PC-9 (cell line): ENCODE measurements at regions of chr7 and their contacts with region 1.

Region 1: DNA sequence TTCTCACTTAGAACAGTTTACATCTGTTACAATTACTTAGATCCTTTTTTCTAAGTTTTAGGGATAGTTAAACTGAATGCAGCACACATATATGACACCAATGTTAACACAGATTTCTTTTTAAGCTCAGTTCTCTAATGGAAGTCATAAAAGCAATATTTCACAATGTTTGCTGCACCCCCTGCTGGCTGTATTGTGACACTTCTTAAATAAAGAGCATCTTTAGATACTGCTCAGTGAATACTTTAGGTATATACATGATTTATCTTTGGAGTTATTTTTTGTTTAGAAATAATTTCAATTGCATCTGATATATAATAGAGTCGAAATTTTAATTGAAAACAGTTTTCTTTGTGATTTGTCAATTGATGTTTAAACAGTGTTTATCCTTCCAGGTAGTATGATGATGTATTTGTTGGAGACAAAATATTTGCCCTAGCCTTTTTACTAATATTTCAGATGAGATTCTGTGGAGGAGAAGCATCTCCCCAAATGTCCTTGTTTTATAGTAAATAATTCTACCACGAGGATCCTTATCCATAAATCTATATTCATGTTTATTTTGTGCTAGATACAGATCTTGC is 174.4 kb downstream of the ST7 start:
- DNase-seq: peak; percentile 18 to 49
- H3K4me3 ChIP-seq: no peak overlapping the region
- H3K27ac ChIP-seq: no peak overlapping the region
- H3K4me1 ChIP-seq: peaks cover 32% of the 10 kb centered on the region
- H3K27me3 ChIP-seq: no peaks in the 10 kb centered on the region
- CTCF ChIP-seq: peak; percentile 83

Region 2: DNA sequence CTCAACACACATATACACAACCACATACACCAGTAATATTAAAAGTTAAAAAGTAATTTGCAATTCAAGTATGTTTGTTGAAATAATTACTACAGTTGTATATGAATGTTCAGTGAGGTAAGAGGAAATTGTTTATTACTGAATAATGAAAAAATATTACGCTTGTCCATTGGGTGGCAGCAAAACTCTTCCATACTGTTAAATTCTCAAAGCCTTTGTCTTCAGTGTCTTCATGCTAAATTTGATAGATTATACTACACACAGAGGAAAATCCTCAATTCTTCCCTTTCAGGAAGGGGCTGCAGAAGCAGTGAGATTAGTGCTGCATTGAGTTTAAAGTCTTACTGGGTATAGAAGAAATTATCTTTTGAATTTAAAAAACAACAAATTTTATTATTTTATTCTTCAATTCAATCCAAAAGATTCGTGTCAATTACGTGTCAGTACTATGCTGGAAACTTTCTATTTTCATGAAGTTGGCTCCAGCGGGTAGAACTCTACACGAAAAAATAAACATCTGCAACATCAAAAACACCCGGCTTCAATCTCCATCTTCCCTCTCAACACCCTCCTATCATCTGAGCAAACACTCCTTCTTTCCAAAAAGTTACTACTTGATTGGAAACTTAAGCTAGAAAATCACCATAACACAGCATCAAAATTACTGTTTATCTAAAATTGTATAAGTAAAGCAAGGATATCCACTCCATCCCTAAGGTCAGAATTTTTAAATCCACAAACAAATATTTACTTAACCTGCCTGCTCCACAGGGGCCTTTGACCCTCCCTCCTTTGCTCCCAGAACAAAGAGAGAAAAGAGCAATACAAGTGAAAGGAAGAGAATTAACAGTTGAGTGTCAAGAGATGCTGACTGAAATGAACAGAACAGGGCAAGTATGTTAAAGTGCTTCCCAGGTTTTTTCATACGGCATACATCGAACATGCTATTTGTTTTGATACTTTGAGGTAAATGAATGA is 954.3 kb before region 1 on chr7:
- CTCF ChIA-PET with region 1: no interaction called
- POLR2A ChIA-PET with region 1: no interaction called
- intact Hi-C with region 1: loop called (anchors 10 kb)
- DNase-seq: peak; percentile 26 to 48
- H3K4me3 ChIP-seq: no peak overlapping the region
- H3K27ac ChIP-seq: no peak overlapping the region
- H3K4me1 ChIP-seq: peaks cover 11% of the 10 kb centered on the region; the same call in 1 of the 2 replicates
- H3K27me3 ChIP-seq: no peaks in the 10 kb centered on the region
- CTCF ChIP-seq: peak; percentile 84

Region 3: DNA sequence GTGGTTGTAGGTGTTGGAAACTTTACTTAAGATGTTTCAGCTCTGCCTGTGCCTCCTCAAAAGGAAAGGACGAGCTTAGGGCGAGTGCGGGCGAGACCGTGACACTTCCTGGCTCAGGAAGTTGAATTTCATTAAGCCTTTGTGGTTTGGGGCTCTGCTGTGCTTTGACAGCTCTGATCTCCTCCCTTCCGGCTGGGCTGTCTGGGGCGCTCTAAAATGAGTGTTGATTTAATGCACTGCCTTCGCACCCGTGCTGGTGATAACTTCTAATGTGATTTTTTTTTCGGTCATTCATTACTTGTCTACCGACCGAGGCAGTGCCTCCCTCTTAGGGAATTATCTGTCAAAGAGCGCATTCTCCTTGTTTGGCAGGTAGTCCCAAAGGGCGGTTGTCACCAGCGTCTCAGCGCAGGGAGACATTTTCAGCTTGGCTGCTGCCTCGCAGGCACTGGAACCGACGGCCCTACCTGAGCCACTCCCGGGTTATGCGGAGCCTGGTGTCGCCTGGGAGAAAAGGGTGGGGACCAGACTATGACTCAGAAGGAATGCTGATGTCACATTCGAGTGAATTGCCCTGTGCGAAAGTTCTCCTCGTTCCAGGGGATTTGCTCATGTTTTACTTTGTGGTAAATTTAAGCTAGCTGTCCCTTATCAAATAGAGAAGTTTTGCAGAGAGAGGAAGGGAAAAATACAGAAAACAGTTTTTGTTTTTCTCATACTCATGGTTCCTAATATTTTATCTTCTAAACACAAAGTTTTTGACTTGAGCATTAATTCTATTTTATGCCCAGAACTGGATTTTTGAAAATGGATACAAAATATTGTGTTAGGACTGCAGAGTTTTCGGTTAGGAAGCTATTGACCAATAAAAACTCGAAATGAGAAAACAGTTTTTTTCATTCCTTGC is 916.4 kb before region 1 on chr7:
- CTCF ChIA-PET with region 1: no interaction called
- POLR2A ChIA-PET with region 1: no interaction called
- intact Hi-C with region 1: loop called (anchors 1 kb)
- DNase-seq: peak; percentile 92 to 93
- H3K4me3 ChIP-seq: peak overlapping the region; percentile 87
- H3K27ac ChIP-seq: peak overlapping the region; percentile 99
- H3K4me1 ChIP-seq: peaks cover 46% of the 10 kb centered on the region
- H3K27me3 ChIP-seq: no peaks in the 10 kb centered on the region
- CTCF ChIP-seq: no peak

Region 4: GRCh38 chr7:116809636-116810266 is 317.9 kb before region 1 on chr7:
- CTCF ChIA-PET with region 1: interaction called, 12 read pairs
- POLR2A ChIA-PET with region 1: no interaction called
- intact Hi-C with region 1: loop called (anchors 10 kb)
- DNase-seq: peak; percentile 31 to 71
- H3K4me3 ChIP-seq: peak overlapping the region; percentile 25; the same call in 1 of the 2 replicates
- H3K27ac ChIP-seq: peak overlapping the region; percentile 81
- H3K4me1 ChIP-seq: peaks cover 44% of the 10 kb centered on the region
- H3K27me3 ChIP-seq: no peaks in the 10 kb centered on the region
- CTCF ChIP-seq: peak; percentile 87

Region 5: DNA sequence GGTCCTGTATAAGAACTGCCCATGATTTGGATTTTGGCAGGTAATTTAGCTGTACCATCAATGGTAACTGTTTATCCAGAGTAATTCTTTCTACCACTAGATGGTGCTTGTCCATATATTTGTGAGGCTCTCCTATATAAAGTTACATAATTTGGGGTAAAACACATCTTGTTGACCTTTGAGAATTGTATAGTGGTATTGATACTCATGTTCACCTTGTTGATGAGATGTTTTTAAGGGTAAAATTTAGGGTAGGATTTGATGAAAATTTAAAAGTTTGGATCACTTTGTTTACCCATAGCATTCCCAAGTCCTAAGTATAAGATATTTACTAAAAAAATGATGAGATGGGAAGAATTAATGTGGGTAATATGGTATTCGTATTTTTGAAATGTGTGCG is 142.8 kb before region 1 on chr7:
- CTCF ChIA-PET with region 1: interaction called, 6 read pairs
- POLR2A ChIA-PET with region 1: no interaction called
- intact Hi-C with region 1: loop called (anchors 1 kb)
- DNase-seq: no peak
- H3K4me3 ChIP-seq: no peak overlapping the region
- H3K27ac ChIP-seq: no peak overlapping the region
- H3K4me1 ChIP-seq: peaks cover 22% of the 10 kb centered on the region
- H3K27me3 ChIP-seq: no peaks in the 10 kb centered on the region
- CTCF ChIP-seq: peak; percentile 77

Region 6: GRCh38 chr7:117157241-117158209 is 29.8 kb after region 1 on chr7:
- CTCF ChIA-PET with region 1: no interaction called
- POLR2A ChIA-PET with region 1: no interaction called
- intact Hi-C with region 1: no loop called
- DNase-seq: peak in 1 of 2 experiments; percentile 34
- H3K4me3 ChIP-seq: no peak overlapping the region
- H3K27ac ChIP-seq: no peak overlapping the region
- H3K4me1 ChIP-seq: no peaks in the 10 kb centered on the region; the same call in 1 of the 2 replicates
- H3K27me3 ChIP-seq: no peaks in the 10 kb centered on the region
- CTCF ChIP-seq: no peak

Region 7: GRCh38 chr7:117169907-117170306 is 42.2 kb after region 1 on chr7:
- CTCF ChIA-PET with region 1: no interaction called
- POLR2A ChIA-PET with region 1: no interaction called
- intact Hi-C with region 1: loop called (anchors 2 kb)
- DNase-seq: peak; percentile 73
- H3K4me3 ChIP-seq: no peak overlapping the region
- H3K27ac ChIP-seq: peak overlapping the region; percentile 44
- H3K4me1 ChIP-seq: peaks cover 13% of the 10 kb centered on the region
- H3K27me3 ChIP-seq: no peaks in the 10 kb centered on the region
- CTCF ChIP-seq: no peak

Region 8: DNA sequence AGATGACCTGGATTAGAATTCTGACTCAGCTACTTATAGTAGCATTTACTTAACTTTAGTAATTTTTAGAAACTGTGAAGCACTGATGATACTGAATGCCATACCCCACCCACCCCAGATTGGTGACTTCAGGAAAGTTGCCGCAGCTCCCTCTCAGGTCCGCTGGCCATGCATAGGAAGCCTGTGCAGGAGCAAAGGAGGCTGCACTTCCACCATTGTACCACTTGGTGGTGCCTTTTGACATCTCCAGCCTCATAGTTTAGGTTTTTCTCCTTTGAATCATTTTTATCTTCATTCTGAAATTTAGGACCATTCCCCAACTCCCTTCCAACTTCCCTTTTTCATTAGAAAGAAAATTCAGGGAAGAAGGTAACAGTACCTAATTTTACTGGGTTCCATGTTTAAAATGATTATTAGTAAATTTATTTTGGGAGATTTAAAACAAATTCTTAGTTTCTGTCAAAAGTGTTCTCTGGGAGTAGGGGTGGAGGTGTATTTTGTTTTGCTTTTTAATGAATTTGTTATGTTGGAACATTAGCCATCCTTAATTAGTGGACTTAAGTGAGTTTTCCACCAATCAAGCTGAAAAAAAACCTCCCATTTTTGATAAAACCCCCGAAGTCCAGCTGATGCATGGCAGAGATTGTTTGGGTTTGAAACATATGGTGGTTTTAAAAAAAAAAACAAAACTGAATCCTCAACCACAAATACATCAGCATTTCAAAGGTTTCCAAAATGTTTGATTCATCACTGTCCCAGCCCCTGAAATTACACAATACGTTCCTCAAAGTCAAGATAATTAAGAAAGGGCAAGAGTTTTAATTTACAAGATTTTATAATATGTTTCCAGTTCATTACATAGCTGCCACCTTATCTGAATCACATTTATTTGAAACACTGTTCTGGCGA is 85.5 kb after region 1 on chr7:
- CTCF ChIA-PET with region 1: no interaction called
- POLR2A ChIA-PET with region 1: no interaction called
- intact Hi-C with region 1: loop called (anchors 2 kb)
- DNase-seq: peak in 1 of 2 experiments; percentile 53
- H3K4me3 ChIP-seq: no peak overlapping the region
- H3K27ac ChIP-seq: no peak overlapping the region
- H3K4me1 ChIP-seq: no peaks in the 10 kb centered on the region
- H3K27me3 ChIP-seq: no peaks in the 10 kb centered on the region
- CTCF ChIP-seq: peak; percentile 90